Panc1 (cell line): ENCODE measurements at regions of chr12 and their contacts with region 1.

Region 1: DNA sequence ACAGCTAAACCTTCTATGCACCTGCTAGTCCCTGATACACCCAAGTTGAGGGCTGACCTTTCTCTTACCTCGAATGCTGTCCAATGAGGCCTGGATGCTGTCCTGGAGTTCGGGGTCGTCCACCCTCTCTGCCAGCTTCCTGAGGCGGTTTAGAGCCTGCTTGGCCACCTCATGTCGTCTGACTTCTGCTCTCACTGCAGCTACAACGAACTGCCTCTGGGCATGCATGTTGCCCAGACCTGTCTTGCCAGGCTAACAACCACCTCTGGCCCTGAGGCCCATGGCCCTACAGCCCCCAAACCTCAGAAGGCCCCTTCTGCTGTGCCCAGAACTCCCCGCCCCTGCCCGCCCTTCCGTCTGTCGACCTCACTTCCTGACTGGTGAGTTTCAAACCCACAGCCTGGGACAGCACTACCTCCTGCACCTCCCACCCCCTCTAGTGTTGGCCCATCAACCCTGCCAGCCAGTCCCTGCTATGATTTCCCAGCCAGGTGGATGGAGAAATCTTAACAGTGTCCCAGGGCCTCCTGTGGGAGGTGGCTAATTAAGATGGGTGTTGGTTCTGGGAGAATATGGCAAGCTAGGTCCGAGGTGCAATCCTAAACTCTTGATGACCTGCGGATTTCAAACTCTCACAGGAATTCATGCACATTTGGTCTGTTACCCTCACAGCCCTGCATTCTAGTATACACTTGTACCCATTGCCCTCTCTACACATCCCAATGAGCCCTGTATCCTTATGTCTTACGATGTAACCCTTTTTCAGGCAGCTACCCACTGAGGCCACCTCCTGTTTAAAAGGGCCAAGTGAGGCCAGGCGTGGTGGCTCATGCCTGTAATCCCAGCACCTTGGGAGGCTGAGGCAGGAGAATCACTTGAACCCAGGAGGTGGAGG is 2.7 kb upstream of the TSPAN31 start:
- DNase-seq: no peak
- ATAC-seq: no peak
- H3K4me3 ChIP-seq: no peak overlapping the region
- H3K27ac ChIP-seq: no peak overlapping the region
- H3K4me1 ChIP-seq: peaks cover 7% of the 10 kb centered on the region
- H3K27me3 ChIP-seq: no peaks in the 10 kb centered on the region; the same call in 1 of the 2 replicates
- CTCF ChIP-seq: no peak; the same call in 1 of the 2 replicates

Region 2: GRCh38 chr12:57522011-57522886 is 219.8 kb before region 1 on chr12 and contains the start of gene MBD6:
- CTCF ChIA-PET with region 1: no interaction called
- POLR2A ChIA-PET with region 1: no interaction called
- in situ Hi-C with region 1: no loop called
- intact Hi-C with region 1: no loop called
- DNase-seq: peak; percentile 80
- ATAC-seq: peak; percentile 66
- H3K4me3 ChIP-seq: peak within 1 kb of the TSS; percentile 85 to 86
- H3K27ac ChIP-seq: peak within 1 kb of the TSS; percentile 97
- H3K4me1 ChIP-seq: peaks cover 39% of the 10 kb centered on the region
- H3K27me3 ChIP-seq: no peaks in the 10 kb centered on the region
- CTCF ChIP-seq: no peak
- total RNA-seq, gene MBD6: 115 TPM

Region 3: DNA sequence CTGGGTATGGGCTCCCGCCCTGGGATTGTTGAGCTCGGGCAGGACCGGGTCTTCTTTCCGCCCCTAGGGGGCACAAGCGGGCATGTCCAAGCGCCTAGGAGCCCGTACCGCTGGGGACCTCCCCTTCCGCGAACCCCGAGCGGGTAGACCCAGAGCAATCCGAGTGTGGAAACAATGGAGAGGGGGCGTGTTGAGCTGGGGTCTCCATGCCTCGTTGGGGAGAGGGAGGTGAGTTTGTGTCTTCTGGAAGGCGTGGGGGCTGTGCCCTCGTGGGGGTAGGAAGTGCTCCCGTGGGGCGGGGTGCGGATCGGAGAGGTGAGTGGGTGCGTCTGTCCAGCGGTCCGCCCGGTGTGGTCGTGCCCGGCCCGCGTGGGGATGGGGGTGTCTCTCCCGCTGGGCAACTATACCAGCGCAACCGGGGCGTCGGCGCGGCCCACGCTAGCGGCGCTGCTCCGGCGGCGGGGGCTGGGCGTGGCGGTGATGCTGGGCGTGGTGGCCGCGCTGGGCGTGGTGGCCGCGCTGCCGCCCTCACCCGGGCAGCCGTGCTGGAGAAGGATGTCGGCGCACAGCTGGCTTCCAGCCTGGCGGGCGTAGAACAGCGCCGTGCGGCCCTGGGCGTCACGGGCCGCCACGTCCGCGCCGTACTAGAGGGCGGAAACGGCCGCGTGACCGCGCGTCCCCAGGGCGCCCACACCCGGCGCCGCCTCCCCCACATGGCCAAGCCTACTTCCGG is 15.8 kb before region 1 on chr12:
- CTCF ChIA-PET with region 1: interaction called, 12 read pairs
- POLR2A ChIA-PET with region 1: no interaction called
- in situ Hi-C with region 1: no loop called
- intact Hi-C with region 1: no loop called
- DNase-seq: no peak
- ATAC-seq: peak; percentile 95
- H3K4me3 ChIP-seq: peak overlapping the region; percentile 93
- H3K27ac ChIP-seq: peak overlapping the region; percentile 82
- H3K4me1 ChIP-seq: peaks cover 4% of the 10 kb centered on the region; the same call in 1 of the 2 replicates
- H3K27me3 ChIP-seq: no peaks in the 10 kb centered on the region
- CTCF ChIP-seq: peak; percentile 96